ENCODE measurements at regions of chr1 and their contacts with region 1.

Region 1: DNA sequence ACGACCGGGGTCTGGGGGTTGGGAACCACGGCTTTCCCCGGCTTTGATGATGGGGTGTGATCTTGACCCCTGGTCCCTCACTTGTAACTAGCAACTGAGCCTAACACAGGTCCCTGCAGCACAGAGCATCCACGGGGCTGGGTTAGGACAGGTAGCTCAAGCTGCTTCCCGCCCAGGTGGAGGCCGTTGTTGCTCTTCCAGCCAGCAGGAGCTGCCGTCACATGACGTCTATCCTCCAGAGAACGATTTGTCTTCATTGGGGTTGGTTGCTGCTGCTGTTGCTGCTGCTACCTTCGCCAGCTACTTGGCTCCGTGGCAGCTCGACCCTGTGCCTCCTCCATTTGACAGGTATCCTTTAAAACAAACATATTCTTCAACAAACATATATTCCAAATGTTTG is 74.3 kb upstream of the ADAR start:
- DNase-seq: no peak
- H3K4me3 ChIP-seq: no peak overlapping the region
- H3K27ac ChIP-seq: no peak overlapping the region
- H3K4me1 ChIP-seq: no peaks in the 10 kb centered on the region
- H3K27me3 ChIP-seq: no peaks in the 10 kb centered on the region
- CTCF ChIP-seq: no peak
- POLR2A ChIP-seq: no peak

Region 2: GRCh38 chr1:153945131-153945794 is 737.0 kb before region 1 on chr1:
- intact Hi-C with region 1: no loop called
- DNase-seq: no peak
- H3K4me3 ChIP-seq: peak overlapping the region; percentile 92 to 95 (median 94)
- H3K27ac ChIP-seq: peak overlapping the region; percentile 95 to 98
- H3K4me1 ChIP-seq: no peaks in the 10 kb centered on the region
- H3K27me3 ChIP-seq: no peaks in the 10 kb centered on the region
- CTCF ChIP-seq: no peak
- POLR2A ChIP-seq: no peak

Region 3: DNA sequence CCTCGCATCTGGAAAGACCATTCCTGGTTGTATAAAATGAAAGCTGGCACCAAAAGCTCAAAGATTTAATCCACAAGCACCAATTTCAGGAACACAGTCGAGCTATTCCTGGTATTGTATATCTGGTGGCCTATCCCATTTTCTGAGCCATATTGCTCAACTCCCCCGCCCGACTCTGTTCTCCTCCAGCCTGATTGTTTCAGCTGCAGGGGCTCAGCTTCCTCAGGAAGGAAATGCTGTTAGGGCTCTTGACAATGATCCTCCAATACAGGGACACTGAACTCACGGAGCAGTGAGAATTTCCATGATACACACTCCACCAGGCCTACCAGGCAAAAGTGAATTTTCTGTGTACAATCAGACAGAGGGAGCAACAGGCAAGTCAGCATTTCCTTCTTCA is 197.1 kb before region 1 on chr1:
- intact Hi-C with region 1: loop called (anchors 5 kb)
- DNase-seq: no peak
- H3K4me3 ChIP-seq: no peak overlapping the region
- H3K27ac ChIP-seq: no peak overlapping the region
- H3K4me1 ChIP-seq: no peaks in the 10 kb centered on the region
- H3K27me3 ChIP-seq: no peaks in the 10 kb centered on the region
- CTCF ChIP-seq: no peak
- POLR2A ChIP-seq: no peak

Measured in breast epithelium (tissue), 4 donors.